ENCODE measurements at regions of chrX and their contacts with region 1.

Region 1: DNA sequence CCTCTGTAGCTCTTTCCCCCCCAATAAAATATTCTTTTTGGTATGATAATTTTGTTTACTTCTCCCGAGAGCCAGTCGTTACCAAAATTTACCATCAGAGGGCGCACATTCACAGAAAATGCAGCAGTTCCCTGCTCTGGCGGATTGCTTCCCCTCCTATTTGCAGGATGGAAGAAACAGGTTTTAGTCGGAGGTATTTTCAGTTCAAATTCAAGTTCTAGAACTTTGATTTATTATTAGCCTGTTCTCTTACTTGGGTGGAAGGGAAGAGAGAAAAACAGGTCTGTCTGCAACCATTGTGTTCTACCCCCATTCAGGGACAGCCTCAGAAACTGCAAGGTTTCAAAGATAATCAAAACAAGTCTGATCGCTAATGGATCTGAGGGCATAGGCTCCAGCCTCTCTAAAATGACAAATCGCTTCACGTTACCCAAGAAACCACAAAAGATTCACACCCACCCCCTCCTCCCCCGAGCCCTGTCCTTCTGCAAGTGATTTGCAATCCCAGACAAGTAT is 263.8 kb upstream of the RPS6KA3 start:
- DNase-seq: peak; percentile 72
- H3K4me3 ChIP-seq: no peak overlapping the region
- H3K27ac ChIP-seq: no peak overlapping the region
- H3K4me1 ChIP-seq: peaks cover 10% of the 10 kb centered on the region
- H3K27me3 ChIP-seq: peaks cover 3% of the 10 kb centered on the region
- CTCF ChIP-seq: peak; percentile 85

Region 2: GRCh38 chrX:20128670-20129069 is 401.8 kb before region 1 on chrX:
- CTCF ChIA-PET with region 1: no interaction called
- POLR2A ChIA-PET with region 1: no interaction called
- intact Hi-C with region 1: no loop called
- DNase-seq: no peak
- H3K4me3 ChIP-seq: no peak overlapping the region
- H3K27ac ChIP-seq: no peak overlapping the region
- H3K4me1 ChIP-seq: no peaks in the 10 kb centered on the region
- H3K27me3 ChIP-seq: no peaks in the 10 kb centered on the region
- CTCF ChIP-seq: no peak

Region 3: DNA sequence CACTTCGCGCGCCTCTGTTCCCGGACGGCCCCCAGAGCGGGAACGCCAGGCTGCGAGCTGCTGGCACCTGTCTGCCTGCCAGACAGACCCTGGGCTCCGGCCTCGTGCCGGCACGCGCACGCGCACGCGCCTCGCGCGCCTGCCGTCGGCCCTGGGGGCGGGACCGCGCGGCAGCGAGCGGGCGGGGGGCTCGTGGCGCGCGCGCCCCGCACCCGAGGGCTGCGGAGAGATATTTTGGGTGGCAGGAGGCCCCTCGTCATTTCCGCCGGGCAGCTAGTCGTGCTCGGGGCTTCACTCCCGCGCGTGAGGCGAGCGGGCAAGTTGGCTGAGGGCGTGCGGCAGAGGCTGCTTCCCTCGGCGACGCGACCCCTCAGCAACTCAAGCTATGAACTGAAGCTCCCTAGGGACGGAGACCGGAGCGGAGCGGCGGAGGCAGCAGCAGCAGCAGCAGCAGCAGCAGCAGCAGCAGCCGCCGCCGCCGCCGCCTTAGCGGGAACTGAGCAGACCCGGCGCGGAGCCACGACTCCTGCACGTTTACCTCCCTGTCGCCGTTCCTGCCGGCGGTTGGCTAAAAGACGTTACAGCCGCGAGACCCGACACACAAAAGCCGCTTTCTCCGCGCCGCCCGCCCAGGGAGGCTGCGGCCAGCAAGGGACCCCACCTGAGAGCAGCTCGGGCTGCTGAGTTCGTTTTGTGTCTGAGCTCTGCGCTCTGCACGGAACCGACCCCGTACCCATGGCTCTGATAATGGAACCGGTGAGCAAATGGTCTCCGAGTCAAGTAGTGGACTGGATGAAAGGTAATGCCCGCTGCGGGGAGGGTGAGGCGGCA is 843.9 kb after region 1 on chrX and contains the start of gene CNKSR2:
- CTCF ChIA-PET with region 1: interaction called, 3 read pairs
- POLR2A ChIA-PET with region 1: no interaction called
- intact Hi-C with region 1: loop called (anchors 10 kb)
- DNase-seq: peak; percentile 39
- H3K4me3 ChIP-seq: peak within 1 kb of the TSS; percentile 35
- H3K27ac ChIP-seq: no peak within 1 kb of the TSS
- H3K4me1 ChIP-seq: no peaks in the 10 kb centered on the region
- H3K27me3 ChIP-seq: peaks cover 40% of the 10 kb centered on the region
- CTCF ChIP-seq: no peak
- total RNA-seq, gene CNKSR2: 0.96 and 1.5 TPM in 2 replicates

Region 4: GRCh38 chrX:21725496-21725895 is 1195.0 kb after region 1 on chrX:
- CTCF ChIA-PET with region 1: no interaction called
- POLR2A ChIA-PET with region 1: no interaction called
- intact Hi-C with region 1: loop called (anchors 5 kb)
- DNase-seq: peak; percentile 34
- H3K4me3 ChIP-seq: no peak overlapping the region
- H3K27ac ChIP-seq: no peak overlapping the region
- H3K4me1 ChIP-seq: no peaks in the 10 kb centered on the region
- H3K27me3 ChIP-seq: peaks cover 4% of the 10 kb centered on the region
- CTCF ChIP-seq: peak; percentile 50

Region 5: DNA sequence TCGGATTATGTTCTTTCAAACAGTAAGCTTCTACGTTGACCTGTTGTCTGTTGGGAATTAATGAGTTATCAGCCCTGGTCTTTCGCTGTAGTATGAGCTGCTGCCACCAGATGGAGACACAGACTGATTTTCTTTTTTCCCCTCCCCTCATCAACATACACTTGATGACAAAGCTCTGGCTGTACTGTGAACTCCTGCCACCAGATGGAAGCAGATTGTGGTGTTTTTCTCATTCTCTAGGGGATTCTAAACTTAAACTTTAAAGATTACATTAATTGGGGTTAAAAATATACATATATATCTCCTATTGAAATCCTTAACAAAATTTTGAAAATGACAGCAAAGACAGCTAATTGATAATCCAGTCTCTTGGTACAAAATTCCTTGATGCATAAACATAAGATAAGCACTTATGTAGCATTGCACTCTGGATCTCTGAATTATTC is 1454.9 kb after region 1 on chrX:
- CTCF ChIA-PET with region 1: no interaction called
- POLR2A ChIA-PET with region 1: no interaction called
- intact Hi-C with region 1: loop called (anchors 5 kb)
- DNase-seq: peak; percentile 86
- H3K4me3 ChIP-seq: no peak overlapping the region
- H3K27ac ChIP-seq: no peak overlapping the region
- H3K4me1 ChIP-seq: no peaks in the 10 kb centered on the region
- H3K27me3 ChIP-seq: no peaks in the 10 kb centered on the region
- CTCF ChIP-seq: peak; percentile 98

Measured in A673 (cell line).